ENCODE measurements at regions of chr19 and their contacts with region 1.

Region 1: DNA sequence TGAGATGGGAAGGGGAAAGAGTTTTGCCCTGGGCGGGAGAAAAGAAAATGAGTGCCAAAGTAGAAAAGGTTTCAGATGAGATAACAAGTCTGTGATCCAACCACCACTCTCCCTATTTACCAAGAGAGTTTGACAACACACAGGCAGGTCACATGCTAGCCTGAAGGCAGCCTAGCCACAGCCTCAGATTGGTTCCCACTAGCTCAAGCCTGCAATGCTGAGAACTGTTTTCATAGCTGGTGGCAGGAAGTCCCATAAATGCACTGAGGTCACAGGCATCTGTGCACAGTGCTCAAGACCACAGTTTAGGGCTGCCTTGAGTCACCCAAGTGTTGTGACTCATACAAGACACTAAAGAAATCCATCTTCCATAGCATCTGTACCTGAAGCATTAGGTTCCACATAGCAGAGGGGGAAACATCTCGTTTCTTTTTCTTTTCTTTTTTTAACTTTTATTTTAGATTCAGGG is 18.5 kb upstream of the POP4 start:
- DNase-seq: peak; percentile 80
- H3K4me3 Mint-ChIP-seq: no peak overlapping the region
- H3K27ac Mint-ChIP-seq: peak overlapping the region; percentile 72
- H3K4me1 Mint-ChIP-seq: peaks cover 58% of the 10 kb centered on the region
- H3K27me3 Mint-ChIP-seq: peaks cover 3% of the 10 kb centered on the region

Region 2: GRCh38 chr19:29212648-29213573 is 374.6 kb before region 1 on chr19 and contains the start of gene UQCRFS1:
- intact Hi-C with region 1: loop called (anchors 5 kb)
- DNase-seq: peak; percentile 97
- H3K4me3 Mint-ChIP-seq: peak within 1 kb of the TSS; percentile 95
- H3K27ac Mint-ChIP-seq: peak within 1 kb of the TSS; percentile 93
- H3K4me1 Mint-ChIP-seq: peaks cover 39% of the 10 kb centered on the region
- H3K27me3 Mint-ChIP-seq: peaks cover 2% of the 10 kb centered on the region
- total RNA-seq, gene UQCRFS1: 40.3 and 43.6 TPM in 2 replicates

Region 3: GRCh38 chr19:29520390-29520789 is 67.2 kb before region 1 on chr19:
- intact Hi-C with region 1: no loop called
- DNase-seq: no peak
- H3K4me3 Mint-ChIP-seq: no peak overlapping the region
- H3K27ac Mint-ChIP-seq: no peak overlapping the region
- H3K4me1 Mint-ChIP-seq: no peaks in the 10 kb centered on the region
- H3K27me3 Mint-ChIP-seq: peaks cover 41% of the 10 kb centered on the region

Region 4: DNA sequence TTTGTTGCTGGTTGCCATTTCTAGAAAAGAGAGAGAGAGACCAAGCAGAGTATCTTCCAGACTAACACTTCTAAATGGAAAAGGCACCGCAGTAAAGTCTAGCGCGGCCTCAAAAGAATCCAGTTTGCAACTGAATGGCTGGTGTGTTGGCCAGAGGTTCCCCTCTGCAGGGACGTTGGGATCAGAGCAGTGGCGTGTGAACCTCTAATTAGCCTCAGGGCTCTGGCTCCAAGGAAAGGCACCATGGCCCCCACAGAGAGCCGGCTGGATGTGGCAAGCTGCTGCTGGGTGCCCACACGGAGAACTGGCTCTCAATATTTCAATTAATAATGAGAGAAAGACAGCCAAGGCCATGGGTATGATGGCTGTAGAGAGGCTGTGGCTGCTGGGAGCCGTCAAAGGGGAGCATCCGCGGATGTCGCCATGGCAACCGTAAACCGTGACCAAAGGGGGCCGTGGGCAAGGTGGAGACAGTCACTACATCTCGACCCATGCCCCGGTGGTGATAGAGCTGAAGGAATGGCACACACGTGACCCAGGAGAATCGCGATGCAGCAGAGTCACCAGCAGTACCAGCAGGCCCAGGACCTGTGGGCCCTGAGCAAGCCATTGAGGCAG is 52.2 kb before region 1 on chr19:
- intact Hi-C with region 1: no loop called
- DNase-seq: no peak
- H3K4me3 Mint-ChIP-seq: no peak overlapping the region
- H3K27ac Mint-ChIP-seq: no peak overlapping the region
- H3K4me1 Mint-ChIP-seq: no peaks in the 10 kb centered on the region
- H3K27me3 Mint-ChIP-seq: peaks cover 32% of the 10 kb centered on the region

Region 5: GRCh38 chr19:29564574-29565005 is 23.0 kb before region 1 on chr19:
- intact Hi-C with region 1: loop called (anchors 1 kb)
- DNase-seq: no peak
- H3K4me3 Mint-ChIP-seq: no peak overlapping the region
- H3K27ac Mint-ChIP-seq: no peak overlapping the region
- H3K4me1 Mint-ChIP-seq: peaks cover 18% of the 10 kb centered on the region
- H3K27me3 Mint-ChIP-seq: peaks cover 18% of the 10 kb centered on the region

Region 6: GRCh38 chr19:29576761-29577648 is 10.5 kb before region 1 on chr19:
- intact Hi-C with region 1: loop called (anchors 1 kb)
- DNase-seq: no peak
- H3K4me3 Mint-ChIP-seq: no peak overlapping the region
- H3K27ac Mint-ChIP-seq: no peak overlapping the region
- H3K4me1 Mint-ChIP-seq: peaks cover 29% of the 10 kb centered on the region
- H3K27me3 Mint-ChIP-seq: peaks cover 21% of the 10 kb centered on the region

Region 7: GRCh38 chr19:31214086-31214485 is 1626.5 kb after region 1 on chr19:
- intact Hi-C with region 1: loop called (anchors 10 kb)
- DNase-seq: peak; percentile 90
- H3K4me3 Mint-ChIP-seq: peak overlapping the region; percentile 76
- H3K27ac Mint-ChIP-seq: peak overlapping the region; percentile 91
- H3K4me1 Mint-ChIP-seq: peaks cover 33% of the 10 kb centered on the region
- H3K27me3 Mint-ChIP-seq: no peaks in the 10 kb centered on the region

Measured in activated T-helper 1 cell treated with anti-CD3 and anti-CD28 coated beads, Interleukin-12 subunit alpha, Interleukin-12 subunit beta, Interleukin-2, Interleukin-4 antibody, amounts not matched to agents 30 ng/mL and 10 ng/mL and 1 ng/mL, durations not matched to agents 14 hours and 24 hours and 36 hours (primary cell).